Sciatic nerve (tissue), 2 donors: ENCODE measurements at regions of chr1 and their contacts with region 1.

Region 1: GRCh38 chr1:153816283-153816889 is 41.2 kb downstream of the SLC27A3 start:
- DNase-seq: no peak
- ATAC-seq: peak; percentile 57

Region 2: DNA sequence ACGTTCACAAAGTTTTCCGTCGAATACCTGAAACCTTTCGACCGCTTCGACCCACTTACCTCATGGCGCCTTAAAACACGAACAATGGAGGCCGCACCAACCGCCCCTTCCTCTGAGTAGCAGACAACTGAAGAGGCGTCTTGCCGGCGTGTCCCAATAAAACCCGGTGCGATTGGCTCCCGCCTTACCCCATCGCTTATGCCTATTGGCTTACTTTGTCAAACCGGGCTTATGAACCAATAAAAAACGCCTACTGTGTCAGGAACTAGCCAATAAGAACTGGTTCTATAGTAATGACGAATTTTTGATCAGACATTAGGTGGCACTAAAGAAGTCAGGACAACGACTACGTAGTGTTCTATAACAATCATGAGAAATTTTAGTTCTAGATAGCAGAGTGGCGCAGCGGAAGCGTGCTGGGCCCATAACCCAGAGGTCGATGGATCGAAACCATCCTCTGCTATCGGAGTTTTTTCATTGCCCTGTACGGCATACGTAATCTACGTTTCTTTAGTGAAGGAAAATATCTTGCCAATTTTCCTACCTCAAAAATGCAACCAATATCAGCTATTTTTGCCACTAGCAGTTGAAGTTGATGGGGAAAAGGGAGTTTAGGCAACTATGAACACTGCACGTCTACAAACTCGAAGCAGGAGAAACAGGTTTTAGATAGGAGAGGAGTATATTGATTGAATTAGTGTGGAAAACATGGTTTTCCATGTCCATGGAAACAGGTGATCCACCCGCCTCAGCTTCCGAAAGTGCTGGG is 145.3 kb before region 1 on chr1 and contains the start of gene ILF2:
- intact Hi-C with region 1: no loop called
- DNase-seq: peak; percentile 98
- ATAC-seq: peak; percentile 98
- total RNA-seq, gene ILF2: 73.5 TPM

Region 3: GRCh38 chr1:153946622-153947241 is 130.3 kb after region 1 on chr1 and contains the start of gene DENND4B:
- intact Hi-C with region 1: loop called (anchors 10 kb)
- DNase-seq: peak; percentile 89
- ATAC-seq: peak; percentile 84
- total RNA-seq, gene DENND4B: 78.9 TPM

Region 4: DNA sequence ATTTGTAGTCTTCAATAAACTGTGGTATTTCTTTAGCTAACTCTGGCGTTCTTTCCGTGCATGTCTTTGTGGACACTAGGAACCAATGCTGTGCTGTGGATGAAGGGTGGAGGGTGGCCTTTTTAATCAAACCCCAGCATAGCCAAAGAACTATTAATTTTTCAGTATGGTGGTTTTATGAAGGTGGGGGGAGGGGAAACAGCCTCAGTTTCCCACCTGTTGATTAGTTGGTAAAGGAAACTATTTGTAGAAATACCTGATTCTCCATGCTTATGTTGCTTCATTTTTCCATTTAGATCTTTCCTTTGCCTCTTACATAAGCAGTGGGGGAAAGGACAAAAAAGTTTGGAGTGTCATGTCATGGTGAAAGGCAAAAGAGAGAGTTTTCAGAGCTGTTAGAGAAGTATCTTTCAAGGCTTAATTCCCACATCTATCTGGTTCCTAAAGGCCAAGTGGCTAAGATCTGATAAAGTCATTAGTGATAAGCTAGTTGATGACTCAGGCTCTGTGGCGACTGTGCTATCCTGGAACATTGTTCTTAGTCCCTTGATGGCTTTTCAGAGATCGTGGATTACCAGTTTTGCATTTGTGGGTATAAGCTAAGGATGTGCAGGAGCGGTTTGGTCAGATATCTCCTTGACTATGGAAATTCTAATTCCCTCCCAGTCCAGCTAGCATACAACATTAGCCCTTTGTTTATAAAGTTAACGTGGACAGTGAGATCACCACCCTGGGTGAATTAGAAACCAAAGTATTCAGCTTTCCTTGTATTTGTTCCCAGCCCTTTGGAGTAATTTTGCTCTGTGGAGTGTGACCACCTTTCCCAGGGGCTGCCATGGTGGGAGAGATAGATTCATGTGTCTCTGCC is 447.3 kb after region 1 on chr1:
- intact Hi-C with region 1: loop called (anchors 10 kb)
- DNase-seq: no peak
- ATAC-seq: no peak